ENCODE measurements at regions of chrX and their contacts with region 1.

Region 1: GRCh38 chrX:40169193-40170101 is 71.7 kb upstream of the BCOR start:
- DNase-seq: peak in 8 of 9 donors; percentile 65 to 81 (median 74)
- ATAC-seq: peak; percentile 79
- H3K4me3 ChIP-seq: peak overlapping the region; percentile 51
- H3K4me3 Mint-ChIP-seq: peak overlapping the region; percentile 86 to 94 (median 90)
- H3K27ac ChIP-seq: peak overlapping the region; percentile 98
- H3K27ac Mint-ChIP-seq: peak overlapping the region; percentile 96 to 99 (median 98)
- H3K4me1 ChIP-seq: peaks cover 14 to 31% of the 10 kb centered on the region in 2 donors
- H3K4me1 Mint-ChIP-seq: peaks cover 17 to 64% (median 40%) of the 10 kb centered on the region in 7 donors
- H3K27me3 ChIP-seq: no peaks in the 10 kb centered on the region
- H3K27me3 Mint-ChIP-seq: no peaks in the 10 kb centered on the region

Region 2: DNA sequence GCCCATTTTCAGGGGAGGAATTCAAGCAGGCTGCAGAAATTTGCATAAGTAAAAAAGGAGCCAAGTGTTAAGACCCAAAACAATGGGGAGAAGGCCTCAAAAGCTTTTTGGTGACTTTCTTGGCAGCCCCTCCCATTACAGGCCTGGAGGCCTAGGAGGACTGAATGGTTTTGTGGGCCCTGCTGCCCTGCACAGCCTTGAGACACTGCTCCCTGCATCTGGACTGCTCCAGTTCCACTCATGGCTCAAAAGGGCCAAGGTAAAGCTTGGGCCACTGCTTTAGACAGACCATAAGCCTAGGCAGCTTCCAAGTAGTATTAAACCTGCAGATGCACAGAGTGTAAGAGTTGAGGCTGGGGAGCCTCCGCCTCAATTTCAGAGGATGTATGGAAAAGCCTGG is 866.6 kb before region 1 on chrX:
- CTCF ChIA-PET with region 1: no interaction called
- POLR2A ChIA-PET with region 1: no interaction called
- intact Hi-C with region 1: no loop called
- DNase-seq: no peak
- ATAC-seq: no peak
- H3K4me3 ChIP-seq: no peak overlapping the region
- H3K4me3 Mint-ChIP-seq: no peak overlapping the region
- H3K27ac ChIP-seq: no peak overlapping the region
- H3K27ac Mint-ChIP-seq: no peak overlapping the region
- H3K4me1 ChIP-seq: no peaks in the 10 kb centered on the region
- H3K4me1 Mint-ChIP-seq: peaks cover 7 to 40% (median 18%) of the 10 kb centered on the region in 7 donors
- H3K27me3 ChIP-seq: no peaks in the 10 kb centered on the region
- H3K27me3 Mint-ChIP-seq: no peaks in the 10 kb centered on the region

Region 3: DNA sequence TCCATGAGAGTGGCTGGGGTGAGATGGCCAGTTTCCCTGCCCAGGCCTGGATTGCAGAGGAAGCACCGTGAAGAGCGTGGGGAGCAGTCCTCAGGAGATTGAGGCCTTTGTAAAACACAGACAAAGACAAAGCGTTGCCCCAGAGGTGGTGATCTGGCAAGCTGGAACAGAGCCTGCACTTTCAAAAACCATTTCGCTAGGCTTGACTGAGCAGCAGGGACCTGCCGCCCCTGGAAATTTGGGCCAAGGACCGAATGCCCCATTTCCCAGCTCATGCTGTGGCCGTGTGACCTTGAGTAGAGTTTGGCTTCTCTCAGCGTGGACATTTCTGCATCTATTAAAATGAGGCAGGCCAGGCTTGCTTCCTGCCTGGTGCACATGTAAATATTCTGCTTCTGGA is 453.0 kb before region 1 on chrX:
- CTCF ChIA-PET with region 1: no interaction called
- POLR2A ChIA-PET with region 1: no interaction called
- intact Hi-C with region 1: no loop called
- DNase-seq: no peak
- ATAC-seq: no peak
- H3K4me3 ChIP-seq: no peak overlapping the region
- H3K4me3 Mint-ChIP-seq: no peak overlapping the region
- H3K27ac ChIP-seq: no peak overlapping the region
- H3K27ac Mint-ChIP-seq: peak overlapping the region in 1 of 9 donors; percentile 42
- H3K4me1 ChIP-seq: no peaks in the 10 kb centered on the region
- H3K4me1 Mint-ChIP-seq: peaks cover 0 to 1% (median 0%) of the 10 kb centered on the region in 7 donors
- H3K27me3 ChIP-seq: no peaks in the 10 kb centered on the region
- H3K27me3 Mint-ChIP-seq: no peaks in the 10 kb centered on the region

Region 4: DNA sequence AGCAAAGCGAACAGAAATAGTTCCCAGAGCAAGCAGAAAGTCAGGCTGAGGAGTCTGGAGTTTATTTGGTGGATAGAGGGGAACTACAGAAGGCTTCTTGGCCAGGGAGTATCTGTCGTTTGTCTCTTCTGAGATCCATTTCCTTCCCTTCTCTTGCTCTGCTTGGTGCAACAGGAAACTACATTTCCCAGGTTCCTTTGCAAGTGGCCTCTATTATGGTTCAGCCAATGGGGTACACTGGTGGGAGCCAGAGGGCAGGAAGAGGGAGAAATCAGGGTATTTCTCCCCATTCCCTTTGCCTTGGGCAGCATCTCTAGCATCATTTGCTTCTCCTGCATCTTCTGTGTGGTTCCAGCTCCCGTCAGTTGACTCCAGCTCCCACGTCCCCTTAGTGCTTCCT is 213.8 kb before region 1 on chrX:
- CTCF ChIA-PET with region 1: no interaction called
- POLR2A ChIA-PET with region 1: no interaction called
- intact Hi-C with region 1: no loop called
- DNase-seq: no peak
- ATAC-seq: no peak
- H3K4me3 ChIP-seq: no peak overlapping the region
- H3K4me3 Mint-ChIP-seq: peak overlapping the region in 2 of 10 donors; percentile 1 to 22
- H3K27ac ChIP-seq: no peak overlapping the region
- H3K27ac Mint-ChIP-seq: peak overlapping the region in 5 of 9 donors; percentile 30 to 70 (median 57)
- H3K4me1 ChIP-seq: peaks cover 0 to 3% of the 10 kb centered on the region in 2 donors
- H3K4me1 Mint-ChIP-seq: peaks cover 8 to 15% (median 10%) of the 10 kb centered on the region in 7 donors
- H3K27me3 ChIP-seq: no peaks in the 10 kb centered on the region
- H3K27me3 Mint-ChIP-seq: no peaks in the 10 kb centered on the region

Region 5: DNA sequence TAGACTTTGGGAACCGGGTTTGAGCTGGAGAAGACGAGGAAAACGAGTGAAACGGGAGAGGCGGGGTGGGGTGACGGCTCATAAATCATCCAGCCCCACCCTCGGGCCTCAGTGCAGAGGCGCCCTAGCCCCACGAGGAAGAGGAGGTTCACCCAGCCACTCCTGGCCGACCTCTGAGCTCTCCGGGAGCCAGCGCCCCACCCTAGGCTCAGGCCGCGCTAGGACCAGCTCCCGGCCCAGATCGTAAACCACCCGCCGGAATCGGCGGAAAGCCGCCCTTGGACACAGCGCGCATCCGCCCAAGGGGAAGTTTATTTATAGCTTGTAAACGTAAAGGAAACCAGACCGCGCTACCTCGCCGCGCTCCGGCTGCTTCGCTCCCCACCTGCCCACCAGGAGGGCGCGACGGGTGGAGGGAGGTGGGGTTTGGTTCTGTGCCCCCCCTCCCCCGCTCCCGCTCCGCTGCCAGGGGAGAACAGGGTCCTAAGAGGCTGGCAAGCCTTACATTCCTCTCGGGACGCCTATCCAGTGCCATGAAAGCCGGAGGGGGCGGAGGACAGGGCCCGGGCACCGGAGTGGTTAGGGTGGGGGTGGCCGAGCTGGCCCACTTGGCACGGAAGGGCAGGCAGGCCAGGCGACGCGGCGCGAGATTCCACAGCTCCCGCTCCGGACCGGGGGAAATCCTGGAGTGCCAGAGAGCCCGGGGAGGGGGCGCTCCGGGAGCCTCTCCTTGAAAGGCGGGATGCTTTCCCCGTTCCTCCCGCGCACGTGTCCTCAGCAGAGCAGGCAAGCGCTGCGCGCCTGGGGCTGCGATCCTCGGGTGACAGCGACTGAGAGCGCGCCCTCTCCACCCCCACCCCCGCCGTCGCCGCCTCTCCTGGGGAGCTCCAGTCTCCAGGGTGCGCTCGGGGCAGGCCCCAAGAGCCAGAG is 155.9 kb before region 1 on chrX:
- CTCF ChIA-PET with region 1: no interaction called
- POLR2A ChIA-PET with region 1: interaction called, 3 read pairs
- intact Hi-C with region 1: loop called (anchors 1 to 5 kb)
- DNase-seq: peak in 2 of 9 donors; percentile 18 to 53
- ATAC-seq: peak; percentile 42
- H3K4me3 ChIP-seq: peak overlapping the region; percentile 51
- H3K4me3 Mint-ChIP-seq: peak overlapping the region; percentile 70 to 87 (median 75)
- H3K27ac ChIP-seq: no peak overlapping the region
- H3K27ac Mint-ChIP-seq: peak overlapping the region in 2 of 9 donors; percentile 43 to 83
- H3K4me1 ChIP-seq: peaks cover 0 to 31% of the 10 kb centered on the region in 2 donors
- H3K4me1 Mint-ChIP-seq: peaks cover 5 to 35% (median 24%) of the 10 kb centered on the region in 7 donors
- H3K27me3 ChIP-seq: no peaks in the 10 kb centered on the region
- H3K27me3 Mint-ChIP-seq: peaks cover 0 to 24% (median 0%) of the 10 kb centered on the region in 5 donors

Region 6: GRCh38 chrX:40153335-40154249 is 15.9 kb before region 1 on chrX:
- CTCF ChIA-PET with region 1: interaction called, 5 read pairs
- POLR2A ChIA-PET with region 1: interaction called, 113 read pairs
- intact Hi-C with region 1: loop called (anchors 1 kb)
- DNase-seq: peak in 4 of 9 donors; percentile 32 to 75 (median 56)
- ATAC-seq: peak; percentile 70
- H3K4me3 ChIP-seq: peak overlapping the region; percentile 50
- H3K4me3 Mint-ChIP-seq: peak overlapping the region; percentile 81 to 88 (median 84)
- H3K27ac ChIP-seq: peak overlapping the region; percentile 27
- H3K27ac Mint-ChIP-seq: peak overlapping the region in 7 of 9 donors; percentile 39 to 84 (median 70)
- H3K4me1 ChIP-seq: peaks cover 0 to 4% of the 10 kb centered on the region in 2 donors
- H3K4me1 Mint-ChIP-seq: peaks cover 0 to 22% (median 14%) of the 10 kb centered on the region in 7 donors
- H3K27me3 ChIP-seq: no peaks in the 10 kb centered on the region
- H3K27me3 Mint-ChIP-seq: peaks cover 0 to 8% (median 0%) of the 10 kb centered on the region in 5 donors

Region 7: GRCh38 chrX:40468033-40468846 is 298.8 kb after region 1 on chrX:
- CTCF ChIA-PET with region 1: no interaction called
- POLR2A ChIA-PET with region 1: interaction called, 3 read pairs
- intact Hi-C with region 1: loop called in 1 of 2 experiments (anchors 5 kb)
- DNase-seq: peak in 5 of 9 donors; percentile 22 to 40 (median 31)
- ATAC-seq: peak; percentile 72
- H3K4me3 ChIP-seq: no peak overlapping the region
- H3K4me3 Mint-ChIP-seq: peak overlapping the region in 6 of 10 donors; percentile 8 to 73 (median 38)
- H3K27ac ChIP-seq: no peak overlapping the region
- H3K27ac Mint-ChIP-seq: peak overlapping the region in 2 of 9 donors; percentile 14 to 69
- H3K4me1 ChIP-seq: peaks cover 0 to 13% of the 10 kb centered on the region in 2 donors
- H3K4me1 Mint-ChIP-seq: peaks cover 14 to 40% (median 33%) of the 10 kb centered on the region in 7 donors
- H3K27me3 ChIP-seq: no peaks in the 10 kb centered on the region
- H3K27me3 Mint-ChIP-seq: no peaks in the 10 kb centered on the region

Measured in naive thymus-derived CD4-positive, alpha-beta T cell (primary cell).